Posterior vena cava (tissue), 2 donors: ENCODE measurements at regions of chr1 and their contacts with region 1.

Region 1: DNA sequence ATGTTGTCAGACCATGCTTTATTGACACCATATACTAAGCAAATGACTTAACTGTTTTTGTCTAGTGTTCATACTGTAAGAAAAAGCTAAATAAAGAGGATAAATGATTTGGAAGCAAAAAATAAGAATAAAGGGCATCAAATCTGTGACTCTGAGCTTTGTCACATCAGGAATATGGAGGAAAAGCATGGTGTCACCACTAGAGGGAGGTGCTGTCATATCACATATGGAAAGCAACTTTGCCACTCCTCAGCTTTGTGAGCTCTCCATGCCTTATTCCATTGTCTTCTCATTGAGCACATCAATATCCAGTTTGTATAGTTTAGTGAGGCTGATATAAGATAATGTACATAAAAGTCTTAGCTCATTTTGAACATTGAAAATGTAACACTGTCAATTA is 20.8 kb upstream of the GBP1 start:
- DNase-seq: no peak

Region 2: GRCh38 chr1:89041119-89041641 is 44.6 kb before region 1 on chr1:
- intact Hi-C with region 1: loop called in 1 of 2 experiments (anchors 2 kb)
- DNase-seq: no peak

Region 3: DNA sequence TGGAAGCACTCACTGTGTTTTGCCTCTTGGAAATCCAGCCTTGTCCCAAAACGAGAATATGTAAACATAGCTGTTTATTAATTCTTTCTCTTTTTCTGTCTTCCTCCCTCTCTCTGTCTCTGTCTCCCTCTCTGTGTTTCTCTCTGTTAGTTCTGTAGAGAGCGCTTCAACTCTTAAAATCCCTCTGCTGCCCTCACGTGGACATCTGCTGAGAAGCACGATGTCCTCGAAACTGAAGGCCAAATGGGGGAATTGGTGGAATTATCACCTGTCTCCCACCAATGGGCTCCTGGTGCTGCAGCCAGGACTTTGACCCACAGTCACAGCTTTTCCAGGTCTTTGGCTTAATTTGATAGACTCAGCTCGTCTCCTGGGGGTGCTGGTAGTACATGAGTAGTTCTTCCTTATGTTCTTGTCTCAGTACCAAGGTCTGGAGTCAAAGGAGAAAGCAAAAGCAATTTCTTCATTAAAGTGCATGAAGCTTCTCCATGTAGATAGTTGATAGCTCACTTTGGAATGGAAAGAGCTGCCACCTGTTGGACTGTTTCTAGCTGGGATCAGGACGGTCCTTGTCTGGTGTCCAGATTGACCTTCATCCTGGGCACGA is 272.6 kb after region 1 on chr1:
- intact Hi-C with region 1: loop called in 1 of 2 experiments (anchors 5 kb)
- DNase-seq: peak; percentile 91